ENCODE measurements at regions of chr14 and their contacts with region 1.

Region 1: DNA sequence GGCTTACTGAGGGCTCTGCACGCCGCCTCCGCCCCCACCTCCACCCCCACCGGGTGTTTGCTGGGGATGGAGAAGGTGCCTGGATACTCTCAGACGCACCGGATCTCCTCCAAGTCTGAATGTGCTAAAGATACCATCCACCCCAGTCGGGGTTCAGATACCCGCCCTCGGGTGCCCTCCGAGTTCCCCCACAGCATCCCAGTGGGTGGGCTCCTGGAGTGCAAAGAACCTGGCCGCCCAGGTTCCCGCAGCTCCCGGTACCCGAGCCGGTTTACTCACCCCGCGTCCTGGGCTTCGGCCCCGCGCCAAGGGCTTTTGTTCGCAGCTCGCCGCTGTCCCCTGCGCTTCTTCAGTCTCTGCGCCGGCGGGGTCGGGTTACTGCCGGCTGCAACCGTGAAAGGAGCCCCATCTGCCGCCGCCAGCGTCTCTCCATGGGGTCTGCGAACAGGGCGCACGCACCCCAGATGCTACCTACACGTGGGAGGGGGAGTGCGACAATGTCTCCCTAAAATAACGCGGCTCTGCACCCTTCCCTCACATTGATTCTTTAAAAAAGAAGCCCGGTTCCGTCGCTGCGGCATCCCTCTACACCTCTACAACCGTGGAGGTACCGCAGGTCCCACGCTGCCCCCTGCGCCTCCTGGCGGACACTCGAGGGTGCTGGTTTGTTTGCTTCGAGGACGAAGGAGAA is at the start of gene CCDC177:
- DNase-seq: peak; percentile 21
- ATAC-seq: peak; percentile 91
- H3K4me3 ChIP-seq: peak within 1 kb of the TSS; percentile 19 to 44
- H3K27ac ChIP-seq: no peak within 1 kb of the TSS
- H3K4me1 ChIP-seq: peaks cover 0 to 4% of the 10 kb centered on the region in 2 experiments; a peak in 1 of 4 replicates
- H3K27me3 ChIP-seq: no peaks in the 10 kb centered on the region
- CTCF ChIP-seq: peak; percentile 77 to 97 (median 85)
- POLR2A ChIP-seq: no peak
- RAD21 ChIP-seq: peak; percentile 74
- total RNA-seq, gene CCDC177: not detected

Region 2: GRCh38 chr14:69535230-69535848 is 39.1 kb before region 1 on chr14:
- CTCF ChIA-PET with region 1: interaction called, 27 read pairs
- POLR2A ChIA-PET with region 1: no interaction called
- RAD21 ChIA-PET with region 1: interaction called in 1 of 2 experiments, 5 read pairs
- intact Hi-C with region 1: loop called (anchors 1 kb)
- DNase-seq: peak; percentile 42
- ATAC-seq: peak; percentile 96
- H3K4me3 ChIP-seq: no peak overlapping the region
- H3K27ac ChIP-seq: no peak overlapping the region
- H3K4me1 ChIP-seq: peaks cover 0 to 12% of the 10 kb centered on the region in 2 experiments; a peak in 2 of 4 replicates
- H3K27me3 ChIP-seq: no peaks in the 10 kb centered on the region
- CTCF ChIP-seq: peak; percentile 73 to 85 (median 80); a peak in 5 of 6 replicates
- POLR2A ChIP-seq: no peak
- RAD21 ChIP-seq: peak; percentile 77

Region 3: GRCh38 chr14:69543341-69544249 is 30.8 kb before region 1 on chr14:
- CTCF ChIA-PET with region 1: interaction called, 14 read pairs
- POLR2A ChIA-PET with region 1: no interaction called
- RAD21 ChIA-PET with region 1: interaction called in 1 of 2 experiments, 3 read pairs
- intact Hi-C with region 1: no loop called
- DNase-seq: peak; percentile 48
- ATAC-seq: peak; percentile 53
- H3K4me3 ChIP-seq: no peak overlapping the region
- H3K27ac ChIP-seq: no peak overlapping the region
- H3K4me1 ChIP-seq: no peaks in the 10 kb centered on the region
- H3K27me3 ChIP-seq: no peaks in the 10 kb centered on the region
- CTCF ChIP-seq: no peak
- POLR2A ChIP-seq: no peak
- RAD21 ChIP-seq: no peak

Region 4: GRCh38 chr14:69760810-69761209 is 186.4 kb after region 1 on chr14:
- CTCF ChIA-PET with region 1: no interaction called
- POLR2A ChIA-PET with region 1: no interaction called
- RAD21 ChIA-PET with region 1: no interaction called
- intact Hi-C with region 1: no loop called
- DNase-seq: no peak
- ATAC-seq: no peak
- H3K4me3 ChIP-seq: no peak overlapping the region
- H3K27ac ChIP-seq: no peak overlapping the region
- H3K4me1 ChIP-seq: no peaks in the 10 kb centered on the region
- H3K27me3 ChIP-seq: no peaks in the 10 kb centered on the region
- CTCF ChIP-seq: no peak
- POLR2A ChIP-seq: no peak
- RAD21 ChIP-seq: no peak

Measured in HCT116 (cell line).